ENCODE measurements at regions of chr6 and their contacts with region 1.

Region 1: GRCh38 chr6:37074053-37074827 is 68.8 kb downstream of the FGD2 start:
- DNase-seq: no peak
- ATAC-seq: no peak
- H3K4me3 ChIP-seq: no peak overlapping the region
- H3K4me3 Mint-ChIP-seq: no peak overlapping the region
- H3K27ac ChIP-seq: no peak overlapping the region
- H3K27ac Mint-ChIP-seq: no peak overlapping the region
- H3K4me1 ChIP-seq: peaks cover 8% of the 10 kb centered on the region
- H3K4me1 Mint-ChIP-seq: peaks cover 16% of the 10 kb centered on the region
- H3K27me3 ChIP-seq: no peaks in the 10 kb centered on the region
- H3K27me3 Mint-ChIP-seq: no peaks in the 10 kb centered on the region
- CTCF ChIP-seq: no peak

Region 2: DNA sequence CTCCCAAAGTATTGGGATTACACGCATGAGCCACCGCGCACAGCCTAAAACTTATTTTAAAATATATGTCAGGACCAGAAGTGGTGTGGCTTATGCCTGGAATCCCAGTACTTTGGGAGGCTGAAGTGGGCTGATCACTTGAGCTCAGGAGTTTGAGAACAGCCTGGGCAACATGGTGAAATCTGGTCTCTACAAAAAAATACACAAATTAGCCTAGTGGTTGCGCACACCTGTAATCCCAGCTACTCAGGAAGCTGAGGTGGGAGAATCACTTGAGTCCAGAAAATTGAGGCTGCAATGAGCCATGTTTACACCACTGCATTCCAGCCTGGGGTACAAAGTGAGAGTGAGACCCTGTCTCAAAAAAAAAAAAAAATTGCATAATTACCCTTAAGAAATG is 645.3 kb before region 1 on chr6:
- CTCF ChIA-PET with region 1: no interaction called
- POLR2A ChIA-PET with region 1: no interaction called
- intact Hi-C with region 1: no loop called
- DNase-seq: no peak
- ATAC-seq: no peak
- H3K4me3 ChIP-seq: no peak overlapping the region
- H3K4me3 Mint-ChIP-seq: no peak overlapping the region
- H3K27ac ChIP-seq: no peak overlapping the region
- H3K27ac Mint-ChIP-seq: no peak overlapping the region
- H3K4me1 ChIP-seq: peaks cover under 1% of the 10 kb centered on the region
- H3K4me1 Mint-ChIP-seq: peaks cover under 1% of the 10 kb centered on the region
- H3K27me3 ChIP-seq: no peaks in the 10 kb centered on the region
- H3K27me3 Mint-ChIP-seq: no peaks in the 10 kb centered on the region
- CTCF ChIP-seq: no peak

Region 3: DNA sequence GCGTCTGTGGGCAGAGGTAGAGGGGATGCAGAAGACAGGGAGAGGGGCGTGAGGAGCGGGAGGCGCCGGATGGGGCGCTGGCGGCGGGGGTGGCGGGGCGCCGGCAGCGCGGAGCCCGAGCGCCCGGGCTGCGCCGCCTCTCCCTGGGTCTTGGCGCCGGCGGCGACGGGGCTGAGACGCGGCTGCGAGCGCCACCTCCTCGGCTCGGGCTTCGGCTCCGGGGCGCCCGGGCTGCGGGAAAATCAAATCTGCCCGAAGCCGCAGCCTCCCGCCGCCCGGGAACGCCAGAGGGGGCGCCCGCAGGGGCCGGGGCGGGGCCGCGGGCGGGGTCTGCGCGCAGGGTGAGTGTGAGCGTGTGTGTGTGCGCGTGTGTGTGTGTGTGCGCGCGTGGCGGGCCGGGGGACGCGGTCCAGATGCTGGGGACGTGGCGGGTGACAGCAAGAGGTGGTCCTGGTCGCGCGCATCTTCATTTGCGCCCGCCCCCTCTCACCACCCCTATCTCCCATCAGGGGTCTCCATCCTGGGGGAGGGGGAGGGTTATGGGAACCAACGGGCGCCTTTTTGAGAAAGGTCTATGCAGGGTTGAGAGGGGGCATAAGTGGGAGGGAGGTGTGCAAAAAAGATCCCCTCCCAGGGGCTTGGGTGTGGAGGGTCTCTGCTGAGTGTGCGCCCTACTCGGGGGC is 234.3 kb before region 1 on chr6:
- CTCF ChIA-PET with region 1: no interaction called
- POLR2A ChIA-PET with region 1: no interaction called
- intact Hi-C with region 1: no loop called
- DNase-seq: peak in 7 of 9 experiments; percentile 11 to 57 (median 50)
- ATAC-seq: peak; percentile 70
- H3K4me3 ChIP-seq: peak overlapping the region; percentile 39 to 43
- H3K4me3 Mint-ChIP-seq: peak overlapping the region; percentile 80
- H3K27ac ChIP-seq: no peak overlapping the region
- H3K27ac Mint-ChIP-seq: no peak overlapping the region
- H3K4me1 ChIP-seq: peaks cover 13% of the 10 kb centered on the region
- H3K4me1 Mint-ChIP-seq: peaks cover 14% of the 10 kb centered on the region
- H3K27me3 ChIP-seq: peaks cover 15% of the 10 kb centered on the region in 2 experiments
- H3K27me3 Mint-ChIP-seq: peaks cover 28% of the 10 kb centered on the region
- CTCF ChIP-seq: no peak

Region 4: GRCh38 chr6:36962874-36963273 is 111.4 kb before region 1 on chr6:
- CTCF ChIA-PET with region 1: no interaction called
- POLR2A ChIA-PET with region 1: no interaction called
- intact Hi-C with region 1: no loop called
- DNase-seq: peak; percentile 48 to 80 (median 69)
- ATAC-seq: peak; percentile 74
- H3K4me3 ChIP-seq: peak overlapping the region in 1 of 2 experiments; percentile 5
- H3K4me3 Mint-ChIP-seq: peak overlapping the region; percentile 61
- H3K27ac ChIP-seq: peak overlapping the region; percentile 16 to 19
- H3K27ac Mint-ChIP-seq: peak overlapping the region; percentile 86
- H3K4me1 ChIP-seq: peaks cover 27% of the 10 kb centered on the region
- H3K4me1 Mint-ChIP-seq: peaks cover 31% of the 10 kb centered on the region
- H3K27me3 ChIP-seq: no peaks in the 10 kb centered on the region
- H3K27me3 Mint-ChIP-seq: no peaks in the 10 kb centered on the region
- CTCF ChIP-seq: no peak

Region 5: GRCh38 chr6:37149745-37150144 is 75.5 kb after region 1 on chr6:
- CTCF ChIA-PET with region 1: no interaction called
- POLR2A ChIA-PET with region 1: no interaction called
- intact Hi-C with region 1: loop called in 1 of 2 experiments (anchors 5 kb)
- DNase-seq: no peak
- ATAC-seq: no peak
- H3K4me3 ChIP-seq: no peak overlapping the region
- H3K4me3 Mint-ChIP-seq: no peak overlapping the region
- H3K27ac ChIP-seq: no peak overlapping the region
- H3K27ac Mint-ChIP-seq: no peak overlapping the region
- H3K4me1 ChIP-seq: no peaks in the 10 kb centered on the region
- H3K4me1 Mint-ChIP-seq: no peaks in the 10 kb centered on the region
- H3K27me3 ChIP-seq: no peaks in the 10 kb centered on the region
- H3K27me3 Mint-ChIP-seq: no peaks in the 10 kb centered on the region
- CTCF ChIP-seq: no peak

Region 6: GRCh38 chr6:37971711-37972390 is 897.6 kb after region 1 on chr6:
- CTCF ChIA-PET with region 1: no interaction called
- POLR2A ChIA-PET with region 1: no interaction called
- intact Hi-C with region 1: no loop called
- DNase-seq: no peak
- ATAC-seq: no peak
- H3K4me3 ChIP-seq: no peak overlapping the region
- H3K4me3 Mint-ChIP-seq: no peak overlapping the region
- H3K27ac ChIP-seq: peak overlapping the region in 1 of 2 experiments; percentile 9
- H3K27ac Mint-ChIP-seq: no peak overlapping the region
- H3K4me1 ChIP-seq: peaks cover 9% of the 10 kb centered on the region
- H3K4me1 Mint-ChIP-seq: peaks cover 43% of the 10 kb centered on the region
- H3K27me3 ChIP-seq: no peaks in the 10 kb centered on the region
- H3K27me3 Mint-ChIP-seq: no peaks in the 10 kb centered on the region
- CTCF ChIP-seq: no peak

Measured in CD8-positive, alpha-beta T cell (primary cell).